ENCODE measurements at regions of chr2 and their contacts with region 1.

Region 1: DNA sequence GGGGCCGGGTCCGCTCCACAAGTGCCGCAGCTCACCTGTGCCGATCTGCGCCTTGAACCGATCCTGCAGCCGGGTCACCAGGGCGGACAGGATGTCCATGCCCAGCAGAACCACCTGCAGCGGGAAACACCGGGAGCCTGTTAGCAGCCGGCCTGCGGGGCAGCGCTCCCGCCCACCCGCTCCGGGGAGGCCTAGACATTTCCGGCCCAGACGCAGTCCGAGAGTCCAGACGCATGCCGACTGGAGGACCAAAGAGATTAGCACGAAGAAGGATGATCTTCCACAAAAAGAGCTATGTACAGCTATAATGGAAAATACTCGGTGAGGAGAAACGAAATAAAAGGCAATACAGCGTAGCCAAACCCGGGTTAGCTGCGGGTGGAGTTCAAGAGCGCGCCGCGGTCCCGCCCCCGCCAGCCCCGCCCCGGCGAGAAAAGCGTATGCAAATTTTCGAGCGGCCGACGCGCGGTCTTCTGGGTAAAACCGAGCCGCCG is 421 bp upstream of the RNU4ATAC start:
- DNase-seq: no peak
- H3K4me3 Mint-ChIP-seq: peak overlapping the region; percentile 90
- H3K27ac Mint-ChIP-seq: peak overlapping the region; percentile 96
- H3K4me1 Mint-ChIP-seq: peaks cover 55% of the 10 kb centered on the region
- H3K27me3 Mint-ChIP-seq: no peaks in the 10 kb centered on the region

Region 2: DNA sequence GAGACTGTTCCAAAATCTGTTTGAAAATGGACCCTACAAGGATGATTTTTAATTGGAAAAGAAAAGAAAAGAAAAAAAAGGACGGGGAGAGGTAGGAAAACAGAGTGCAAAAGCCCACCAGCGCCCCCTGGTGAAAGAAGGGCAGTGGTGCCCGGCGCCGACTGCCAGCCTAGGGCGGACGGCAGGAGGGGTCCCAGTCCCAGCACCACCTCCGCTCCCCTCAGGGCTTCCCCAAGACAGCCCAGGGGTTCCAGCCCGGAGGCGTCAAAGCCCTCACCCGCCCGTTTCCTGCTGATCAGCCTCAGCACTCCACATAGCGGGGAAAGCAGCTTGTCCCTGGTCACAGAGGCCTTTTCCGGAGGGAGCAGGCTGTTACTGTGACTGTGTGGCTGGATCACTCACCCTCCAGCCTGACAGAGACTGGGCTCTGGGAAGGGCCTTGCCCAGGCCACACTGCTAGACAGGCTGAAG is 459.2 kb before region 1 on chr2:
- intact Hi-C with region 1: no loop called
- DNase-seq: peak; percentile 84
- H3K4me3 Mint-ChIP-seq: no peak overlapping the region
- H3K27ac Mint-ChIP-seq: no peak overlapping the region
- H3K4me1 Mint-ChIP-seq: no peaks in the 10 kb centered on the region
- H3K27me3 Mint-ChIP-seq: peaks cover 16% of the 10 kb centered on the region

Region 3: DNA sequence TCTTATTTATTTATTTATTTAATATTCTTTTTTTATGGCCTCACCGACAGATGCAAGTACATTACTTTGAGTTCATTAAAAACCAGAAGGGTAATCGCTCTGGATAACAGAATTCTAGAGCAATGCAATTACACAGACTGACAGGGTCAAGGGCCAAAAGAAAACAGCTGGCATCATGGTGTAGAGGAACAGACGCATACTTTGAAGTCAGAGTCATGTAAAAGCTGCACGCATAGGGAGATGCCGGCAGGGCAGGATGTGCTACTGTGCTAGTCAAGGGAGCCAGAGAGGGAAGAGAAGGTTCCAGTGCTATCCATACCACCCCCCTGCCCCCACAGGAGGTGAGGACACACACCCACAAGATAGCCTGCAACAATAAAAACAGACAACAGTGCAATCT is 130.1 kb before region 1 on chr2:
- intact Hi-C with region 1: loop called (anchors 10 kb)
- DNase-seq: no peak
- H3K4me3 Mint-ChIP-seq: no peak overlapping the region
- H3K27ac Mint-ChIP-seq: no peak overlapping the region
- H3K4me1 Mint-ChIP-seq: peaks cover 2% of the 10 kb centered on the region
- H3K27me3 Mint-ChIP-seq: no peaks in the 10 kb centered on the region

Region 4: GRCh38 chr2:121699421-121700333 is 169.4 kb after region 1 on chr2:
- intact Hi-C with region 1: loop called (anchors 1 kb)
- DNase-seq: peak; percentile 94
- H3K4me3 Mint-ChIP-seq: peak overlapping the region; percentile 91
- H3K27ac Mint-ChIP-seq: peak overlapping the region; percentile 98
- H3K4me1 Mint-ChIP-seq: peaks cover 39% of the 10 kb centered on the region
- H3K27me3 Mint-ChIP-seq: no peaks in the 10 kb centered on the region

Region 5: DNA sequence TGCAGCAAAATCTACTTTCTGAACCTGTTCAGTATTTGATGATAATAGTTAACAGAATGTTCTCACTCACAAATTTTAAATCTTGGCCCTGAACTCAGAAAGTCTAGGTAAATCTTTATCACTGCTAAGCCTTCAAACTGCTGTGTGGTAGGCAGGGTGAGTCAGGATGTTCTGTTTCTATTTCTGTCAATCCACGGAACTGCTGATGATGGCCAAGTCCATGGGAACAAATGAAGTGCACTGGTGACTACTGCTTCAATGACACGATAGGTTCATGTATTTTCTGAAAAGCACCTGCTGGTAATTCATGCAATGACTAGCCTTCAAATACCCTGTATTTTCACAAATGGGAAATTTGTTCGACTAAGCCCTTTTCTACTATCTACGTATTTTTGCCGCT is 192.2 kb after region 1 on chr2:
- intact Hi-C with region 1: loop called (anchors 1 kb)
- DNase-seq: no peak
- H3K4me3 Mint-ChIP-seq: peak overlapping the region; percentile 3
- H3K27ac Mint-ChIP-seq: peak overlapping the region; percentile 82
- H3K4me1 Mint-ChIP-seq: peaks cover 15% of the 10 kb centered on the region
- H3K27me3 Mint-ChIP-seq: no peaks in the 10 kb centered on the region

Region 6: GRCh38 chr2:121736462-121737341 is 206.4 kb after region 1 on chr2 and contains the start of gene NIFK:
- intact Hi-C with region 1: loop called (anchors 1 kb)
- DNase-seq: peak; percentile 100
- H3K4me3 Mint-ChIP-seq: peak within 1 kb of the TSS; percentile 90
- H3K27ac Mint-ChIP-seq: peak within 1 kb of the TSS; percentile 93
- H3K4me1 Mint-ChIP-seq: peaks cover 23% of the 10 kb centered on the region
- H3K27me3 Mint-ChIP-seq: no peaks in the 10 kb centered on the region
- total RNA-seq, gene NIFK: 164 and 177 TPM in 2 replicates

Region 7: GRCh38 chr2:121755236-121756111 is 225.2 kb after region 1 on chr2 and contains the start of gene TSN:
- intact Hi-C with region 1: loop called (anchors 1 kb)
- DNase-seq: peak; percentile 99
- H3K4me3 Mint-ChIP-seq: peak within 1 kb of the TSS; percentile 96
- H3K27ac Mint-ChIP-seq: peak within 1 kb of the TSS; percentile 93
- H3K4me1 Mint-ChIP-seq: peaks cover 25% of the 10 kb centered on the region
- H3K27me3 Mint-ChIP-seq: no peaks in the 10 kb centered on the region
- total RNA-seq, gene TSN: 72.6 and 76.5 TPM in 2 replicates

Measured in activated CD4-positive, alpha-beta T cell treated with anti-CD3 and anti-CD28 coated beads, Interleukin-2, amount 10 ng/mL, durations not matched to agents 24 days and 14 days (primary cell).